ENCODE measurements at regions of chr10 and their contacts with region 1.

Region 1: DNA sequence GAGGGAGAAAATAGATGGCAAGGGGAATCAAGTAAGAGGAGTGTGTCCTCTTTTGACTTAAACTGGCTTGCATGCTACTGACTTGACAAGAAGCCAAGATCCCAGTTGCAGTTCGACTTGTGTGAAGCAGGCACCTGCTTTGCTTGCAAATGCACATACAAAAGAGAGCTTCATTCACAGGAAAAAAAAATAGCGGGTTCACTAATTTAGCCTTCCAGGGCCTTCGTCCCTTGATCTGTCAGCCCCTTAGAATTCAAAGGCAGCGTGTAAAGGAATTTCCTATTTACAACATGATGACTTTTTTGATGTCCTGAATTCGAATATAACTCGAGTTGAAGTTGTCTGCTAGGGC is 192.1 kb downstream of the CELF2 start:
- DNase-seq: peak; percentile 85
- H3K4me3 ChIP-seq: no peak overlapping the region
- H3K27ac ChIP-seq: peak overlapping the region; percentile 71
- H3K4me1 ChIP-seq: peaks cover 36% of the 10 kb centered on the region
- H3K27me3 ChIP-seq: no peaks in the 10 kb centered on the region
- CTCF ChIP-seq: no peak
- POLR2A ChIP-seq: no peak

Region 2: GRCh38 chr10:10734356-10735064 is 475.3 kb before region 1 on chr10:
- CTCF ChIA-PET with region 1: no interaction called
- POLR2A ChIA-PET with region 1: interaction called, 11 read pairs
- dilution Hi-C with region 1: no loop called
- intact Hi-C with region 1: no loop called
- DNase-seq: no peak
- H3K4me3 ChIP-seq: no peak overlapping the region
- H3K27ac ChIP-seq: no peak overlapping the region
- H3K4me1 ChIP-seq: no peaks in the 10 kb centered on the region
- H3K27me3 ChIP-seq: no peaks in the 10 kb centered on the region
- CTCF ChIP-seq: no peak
- POLR2A ChIP-seq: no peak

Region 3: DNA sequence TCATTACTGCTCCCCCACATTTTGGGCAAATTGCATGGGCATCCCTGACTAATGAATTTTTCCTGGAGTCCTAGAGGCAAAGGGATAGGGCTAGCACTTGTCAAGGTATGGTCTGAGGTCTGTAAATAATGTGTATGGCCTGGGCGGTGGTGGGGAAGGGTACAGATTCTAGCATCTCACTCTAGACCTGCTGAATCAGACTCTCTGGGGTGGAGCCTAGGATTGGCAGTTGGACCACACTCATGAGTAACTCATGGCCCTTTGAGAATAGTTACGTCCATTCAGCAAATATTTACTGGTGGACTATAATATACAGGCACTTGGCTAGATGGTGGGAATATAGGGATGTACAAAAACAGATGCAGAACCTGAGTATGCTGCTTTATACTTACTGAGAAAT is 74.1 kb before region 1 on chr10:
- CTCF ChIA-PET with region 1: no interaction called
- POLR2A ChIA-PET with region 1: no interaction called
- dilution Hi-C with region 1: no loop called
- intact Hi-C with region 1: no loop called
- DNase-seq: no peak
- H3K4me3 ChIP-seq: no peak overlapping the region
- H3K27ac ChIP-seq: no peak overlapping the region
- H3K4me1 ChIP-seq: no peaks in the 10 kb centered on the region
- H3K27me3 ChIP-seq: no peaks in the 10 kb centered on the region
- CTCF ChIP-seq: no peak
- POLR2A ChIP-seq: no peak

Region 4: GRCh38 chr10:11165591-11166543 is 43.9 kb before region 1 on chr10:
- CTCF ChIA-PET with region 1: interaction called, 3 read pairs
- POLR2A ChIA-PET with region 1: no interaction called
- dilution Hi-C with region 1: no loop called
- intact Hi-C with region 1: loop called (anchors 1 kb)
- DNase-seq: peak; percentile 33
- H3K4me3 ChIP-seq: peak overlapping the region; percentile 46 to 77 (median 67)
- H3K27ac ChIP-seq: no peak overlapping the region
- H3K4me1 ChIP-seq: peaks cover 9% of the 10 kb centered on the region
- H3K27me3 ChIP-seq: no peaks in the 10 kb centered on the region
- CTCF ChIP-seq: peak; percentile 29 to 42
- POLR2A ChIP-seq: no peak